Calu3 (cell line): ENCODE measurements at regions of chr7 and their contacts with region 1.

Region 1: DNA sequence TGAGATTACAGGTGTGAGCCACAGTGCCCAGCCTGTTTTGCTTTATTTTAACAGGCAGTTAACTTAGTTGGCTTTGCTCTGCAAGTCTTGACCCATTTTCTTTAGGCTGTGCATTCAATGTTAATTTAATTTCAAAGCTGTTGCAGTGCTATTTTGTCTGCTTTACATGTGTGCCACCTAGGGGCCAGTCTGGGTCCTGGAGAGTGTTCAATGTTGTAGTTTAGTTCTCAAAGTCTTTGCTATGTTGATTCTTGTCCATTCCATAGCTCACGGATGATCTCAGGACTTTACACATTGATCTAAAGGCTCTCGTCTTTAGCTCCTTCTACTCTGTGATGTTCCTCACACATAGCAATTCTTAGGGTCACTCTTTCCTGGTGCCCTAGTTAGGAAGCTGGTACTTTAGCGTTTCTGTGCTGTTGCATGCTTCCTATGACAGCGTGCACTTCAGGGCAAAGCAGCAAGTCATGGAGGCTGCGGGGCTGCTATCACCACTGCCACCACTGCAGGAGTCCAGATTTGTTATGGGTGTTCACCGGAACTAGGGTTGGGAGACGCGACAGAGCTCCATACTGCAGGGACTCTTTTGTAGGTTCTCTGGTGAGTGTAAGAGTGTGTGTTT is 16.4 kb upstream of the ABCA13 start:
- DNase-seq: peak; percentile 79
- H3K4me3 Mint-ChIP-seq: no peak overlapping the region
- H3K27ac Mint-ChIP-seq: peak overlapping the region; percentile 13
- H3K4me1 Mint-ChIP-seq: no peaks in the 10 kb centered on the region
- H3K27me3 Mint-ChIP-seq: peaks cover 8% of the 10 kb centered on the region
- CTCF ChIP-seq: peak; percentile 88

Region 2: DNA sequence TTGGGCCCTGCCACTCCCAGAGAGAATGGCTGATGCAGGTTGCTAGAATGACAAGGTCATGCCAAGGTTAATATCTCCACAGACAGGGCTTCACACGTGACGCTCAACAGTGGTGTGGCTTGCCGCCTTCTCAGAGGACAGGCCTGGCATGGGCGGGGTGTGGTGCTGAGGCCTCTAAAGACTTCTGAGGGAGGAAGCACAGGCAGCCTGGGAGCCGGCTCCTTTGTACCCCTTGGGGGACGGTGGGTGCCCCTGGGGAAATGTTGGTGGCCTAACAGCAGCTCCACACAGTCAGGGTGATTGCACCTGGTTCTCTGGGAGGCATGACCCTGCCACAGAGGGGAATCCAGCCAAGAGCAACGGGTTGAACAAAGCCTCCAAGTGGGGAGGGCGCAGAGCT is 321.7 kb before region 1 on chr7:
- CTCF ChIA-PET with region 1: no interaction called
- intact Hi-C with region 1: no loop called
- DNase-seq: no peak
- H3K4me3 Mint-ChIP-seq: no peak overlapping the region
- H3K27ac Mint-ChIP-seq: no peak overlapping the region
- H3K4me1 Mint-ChIP-seq: no peaks in the 10 kb centered on the region
- H3K27me3 Mint-ChIP-seq: peaks cover 52% of the 10 kb centered on the region
- CTCF ChIP-seq: no peak

Region 3: DNA sequence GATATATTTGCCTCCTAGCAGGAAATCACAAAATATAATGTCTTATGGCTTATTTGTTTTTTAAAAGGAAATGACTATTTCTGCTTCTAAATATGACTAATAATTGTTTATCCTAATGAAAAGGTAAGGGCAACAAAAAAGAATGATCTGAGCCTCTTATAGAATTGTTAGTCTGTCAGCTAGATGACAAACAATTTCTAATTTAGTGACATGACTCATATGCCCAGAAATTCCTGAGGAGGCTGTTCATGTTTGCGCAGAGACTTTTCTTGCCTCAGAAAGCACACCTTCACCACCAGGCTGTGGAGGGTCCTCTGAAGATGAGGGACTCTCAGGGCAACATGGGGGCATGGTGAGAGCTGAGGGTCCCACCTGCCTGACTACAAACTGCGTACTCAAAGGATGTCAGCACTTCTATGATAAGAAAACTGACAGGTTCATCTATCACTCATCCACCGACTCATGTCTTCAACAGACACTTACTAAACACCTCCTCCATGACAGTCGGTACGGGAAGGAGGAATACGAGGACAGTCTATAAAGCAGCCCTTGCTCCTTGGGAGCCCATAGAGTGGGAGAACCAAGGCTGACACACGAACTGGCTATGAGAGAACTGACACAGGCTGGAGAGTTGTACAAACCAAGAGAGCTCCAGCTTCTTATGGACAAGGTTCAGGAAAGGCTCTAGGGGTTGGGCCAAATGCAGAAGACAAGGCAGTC is 308.6 kb before region 1 on chr7:
- CTCF ChIA-PET with region 1: no interaction called
- intact Hi-C with region 1: loop called (anchors 5 kb)
- DNase-seq: peak; percentile 43
- H3K4me3 Mint-ChIP-seq: no peak overlapping the region
- H3K27ac Mint-ChIP-seq: peak overlapping the region; percentile 53
- H3K4me1 Mint-ChIP-seq: peaks cover 24% of the 10 kb centered on the region
- H3K27me3 Mint-ChIP-seq: peaks cover 31% of the 10 kb centered on the region
- CTCF ChIP-seq: no peak

Region 4: GRCh38 chr7:47945261-47946001 is 209.5 kb before region 1 on chr7:
- CTCF ChIA-PET with region 1: interaction called, 31 read pairs
- intact Hi-C with region 1: loop called (anchors 1 kb)
- DNase-seq: peak; percentile 85
- H3K4me3 Mint-ChIP-seq: no peak overlapping the region
- H3K27ac Mint-ChIP-seq: no peak overlapping the region
- H3K4me1 Mint-ChIP-seq: peaks cover 13% of the 10 kb centered on the region
- H3K27me3 Mint-ChIP-seq: no peaks in the 10 kb centered on the region
- CTCF ChIP-seq: peak; percentile 76

Region 5: DNA sequence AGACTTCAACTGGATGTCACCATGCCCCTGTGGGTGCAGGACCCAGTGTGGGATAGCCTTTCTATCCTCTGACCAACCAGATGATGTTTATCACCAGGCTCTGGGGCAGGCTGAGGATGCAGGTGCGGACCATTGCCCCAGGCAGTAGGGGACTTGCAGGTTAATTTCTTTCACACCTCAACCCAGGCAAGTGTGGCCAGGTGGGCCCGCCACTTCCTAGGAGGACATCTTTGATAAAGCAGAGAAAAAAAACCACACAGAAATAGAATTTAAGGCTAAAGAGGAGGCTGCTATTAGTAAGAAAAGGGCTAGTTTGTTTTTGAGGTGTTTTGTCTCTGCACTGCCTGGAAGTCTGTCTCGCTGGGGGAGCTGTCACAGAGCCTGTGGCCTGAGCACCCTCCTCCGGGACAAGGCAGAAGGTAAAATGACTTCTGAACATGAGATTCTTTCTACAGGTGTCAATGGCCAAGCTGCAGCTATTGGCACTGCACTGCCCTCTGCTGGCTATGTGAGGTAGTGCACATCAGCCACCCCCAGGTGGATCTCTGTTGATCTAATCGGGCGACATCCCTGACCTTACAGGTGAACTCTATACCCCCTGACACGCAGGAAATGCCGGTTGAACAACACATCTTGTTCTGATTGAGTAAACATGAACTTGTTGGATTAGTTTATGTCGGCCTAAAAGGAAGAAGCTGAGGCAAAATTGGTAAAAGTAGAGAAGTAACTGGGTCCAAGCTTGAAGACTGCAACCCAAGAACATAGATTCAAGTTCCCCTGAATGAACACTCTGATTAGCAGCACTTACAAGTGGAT is 44.8 kb before region 1 on chr7:
- CTCF ChIA-PET with region 1: interaction called, 13 read pairs
- intact Hi-C with region 1: loop called (anchors 2 kb)
- DNase-seq: peak; percentile 93
- H3K4me3 Mint-ChIP-seq: no peak overlapping the region
- H3K27ac Mint-ChIP-seq: peak overlapping the region; percentile 45
- H3K4me1 Mint-ChIP-seq: peaks cover 12% of the 10 kb centered on the region
- H3K27me3 Mint-ChIP-seq: no peaks in the 10 kb centered on the region
- CTCF ChIP-seq: peak; percentile 100

Region 6: DNA sequence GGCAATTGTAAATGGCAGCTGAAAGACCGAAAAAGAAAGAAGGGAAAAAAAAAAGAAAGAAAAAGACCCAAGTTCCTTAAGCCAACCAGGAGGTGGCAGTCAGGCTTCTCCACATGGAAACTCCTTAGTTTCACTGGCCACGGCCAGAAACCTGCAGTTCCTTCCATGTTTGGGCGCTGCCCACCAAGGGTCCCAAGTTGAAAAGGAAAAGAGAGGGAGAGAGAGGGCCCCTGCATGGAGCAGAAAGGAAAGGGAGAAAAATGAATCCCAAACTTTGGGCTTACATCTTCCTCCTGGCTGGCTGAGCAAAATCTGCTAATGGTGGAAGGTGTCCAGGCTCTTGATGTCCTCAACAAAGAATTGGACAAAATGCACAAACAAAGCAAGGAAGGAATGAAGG is 15.4 kb before region 1 on chr7:
- CTCF ChIA-PET with region 1: interaction called, 20 read pairs
- intact Hi-C with region 1: loop called (anchors 1 kb)
- DNase-seq: peak; percentile 60
- H3K4me3 Mint-ChIP-seq: peak overlapping the region; percentile 9
- H3K27ac Mint-ChIP-seq: peak overlapping the region; percentile 9
- H3K4me1 Mint-ChIP-seq: peaks cover 32% of the 10 kb centered on the region
- H3K27me3 Mint-ChIP-seq: no peaks in the 10 kb centered on the region
- CTCF ChIP-seq: peak; percentile 60